Esophagus squamous epithelium (tissue), 5 donors: ENCODE measurements at regions of chr2 and their contacts with region 1.

Region 1: GRCh38 chr2:39913648-39914461 is 134.8 kb upstream of the THUMPD2 start:
- DNase-seq: no peak
- H3K4me3 ChIP-seq: no peak overlapping the region
- H3K27ac ChIP-seq: no peak overlapping the region
- H3K4me1 ChIP-seq: peaks cover 0 to 4% (median 0%) of the 10 kb centered on the region in 3 donors
- H3K27me3 ChIP-seq: no peaks in the 10 kb centered on the region
- CTCF ChIP-seq: peak; percentile 38 to 81 (median 72)
- POLR2A ChIP-seq: no peak

Region 2: GRCh38 chr2:39696838-39697237 is 217.0 kb before region 1 on chr2:
- intact Hi-C with region 1: no loop called
- DNase-seq: no peak
- H3K4me3 ChIP-seq: no peak overlapping the region
- H3K27ac ChIP-seq: peak overlapping the region in 1 of 4 donors; percentile 5
- H3K4me1 ChIP-seq: peaks cover 0 to 5% (median 0%) of the 10 kb centered on the region in 3 donors
- H3K27me3 ChIP-seq: no peaks in the 10 kb centered on the region
- CTCF ChIP-seq: peak in 4 of 6 experiments; percentile 7 to 43 (median 24)
- POLR2A ChIP-seq: no peak

Region 3: DNA sequence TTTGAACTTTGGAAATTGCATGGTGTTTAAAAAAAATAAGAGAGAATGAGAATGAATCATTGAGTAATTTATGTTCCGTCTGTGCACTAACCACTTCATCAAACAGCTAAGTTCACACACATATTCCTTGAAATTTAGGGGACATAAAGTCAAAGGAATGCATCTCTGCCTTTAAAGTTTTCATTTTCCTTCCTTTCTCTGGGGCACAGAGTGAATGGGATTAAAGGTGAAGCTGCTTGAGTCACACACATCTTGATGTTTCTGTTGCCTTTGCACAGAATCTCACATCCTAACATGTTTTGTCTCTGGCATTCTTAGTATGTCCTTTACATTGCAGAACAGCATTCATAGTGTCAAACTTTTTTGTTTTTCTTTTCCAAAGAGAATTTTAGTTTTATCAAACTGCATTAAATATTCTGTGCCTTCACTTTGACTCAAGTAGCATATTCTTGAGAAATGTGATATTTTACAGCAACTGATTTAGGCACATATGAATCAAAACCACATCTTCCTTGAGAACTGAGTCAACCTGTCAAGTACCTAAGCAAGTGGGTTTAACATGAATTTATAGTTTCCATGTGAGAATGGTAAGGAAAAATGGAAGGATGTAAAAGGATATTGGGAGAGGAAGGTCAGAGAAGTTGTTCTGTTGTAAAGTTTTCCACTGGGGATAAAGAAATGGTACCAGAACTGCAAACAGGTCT is 34.3 kb after region 1 on chr2:
- intact Hi-C with region 1: no loop called
- DNase-seq: no peak
- H3K4me3 ChIP-seq: no peak overlapping the region
- H3K27ac ChIP-seq: no peak overlapping the region
- H3K4me1 ChIP-seq: no peaks in the 10 kb centered on the region
- H3K27me3 ChIP-seq: no peaks in the 10 kb centered on the region
- CTCF ChIP-seq: no peak
- POLR2A ChIP-seq: no peak

Region 4: GRCh38 chr2:40554668-40555285 is 640.9 kb after region 1 on chr2:
- intact Hi-C with region 1: loop called (anchors 5 kb)
- DNase-seq: no peak
- H3K4me3 ChIP-seq: no peak overlapping the region
- H3K27ac ChIP-seq: no peak overlapping the region
- H3K4me1 ChIP-seq: no peaks in the 10 kb centered on the region
- H3K27me3 ChIP-seq: no peaks in the 10 kb centered on the region
- CTCF ChIP-seq: peak; percentile 48 to 84 (median 83)
- POLR2A ChIP-seq: no peak